ENCODE measurements at regions of chr17 and their contacts with region 1.

Region 1: DNA sequence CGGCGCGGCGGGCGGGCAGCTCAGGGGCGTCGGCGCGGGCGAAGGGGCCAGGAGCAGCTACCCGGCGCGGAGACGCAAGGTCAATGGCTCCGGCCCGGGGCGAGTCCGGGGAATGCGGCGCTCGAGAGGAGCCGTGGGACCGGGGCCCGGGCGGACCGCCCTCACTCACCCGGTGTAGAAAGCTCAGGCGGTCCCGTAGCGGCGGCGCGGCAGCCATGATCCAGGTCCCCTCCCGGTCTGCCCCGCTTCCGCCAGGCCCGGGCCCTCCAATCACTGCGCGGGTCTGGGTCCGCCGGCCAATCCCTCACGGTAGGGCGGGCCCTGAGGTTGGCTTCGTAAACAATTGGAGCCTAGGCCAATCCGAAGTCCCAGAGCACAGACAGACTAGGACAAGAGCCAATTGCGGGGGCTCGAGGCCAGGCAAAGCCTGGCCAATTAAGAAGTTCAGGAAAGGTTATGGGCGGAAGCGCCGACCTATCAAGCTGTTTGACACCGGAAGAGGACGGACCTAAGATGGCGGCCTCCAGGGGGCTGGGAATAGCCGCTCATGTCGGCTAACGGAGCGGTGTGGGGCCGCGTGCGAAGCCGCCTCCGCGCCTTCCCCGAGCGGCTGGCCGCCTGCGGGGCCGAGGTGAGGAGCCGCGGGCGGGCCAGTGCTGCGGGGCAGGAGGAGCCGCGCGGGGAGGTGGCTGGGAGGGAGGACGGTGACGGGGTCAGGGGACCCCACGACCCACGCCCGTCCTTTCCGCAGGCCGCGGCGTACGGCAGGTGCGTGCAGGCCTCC is at the starts of genes NDUFAF8 and TEPSIN:
- DNase-seq: peak; percentile 97
- ATAC-seq: peak; percentile 99
- H3K4me3 Mint-ChIP-seq: peak within 1 kb of the TSS; percentile 93
- H3K27ac Mint-ChIP-seq: peak within 1 kb of the TSS; percentile 96
- H3K4me1 Mint-ChIP-seq: peaks cover 25% of the 10 kb centered on the region
- H3K27me3 Mint-ChIP-seq: no peaks in the 10 kb centered on the region
- total RNA-seq, gene NDUFAF8: 31.0 to 57.9 TPM
- total RNA-seq, gene TEPSIN: 17.8 to 20.3 TPM

Region 2: GRCh38 chr17:80414803-80415625 is 824.0 kb before region 1 on chr17 and contains the start of gene ENDOV:
- CTCF ChIA-PET with region 1: no interaction called
- POLR2A ChIA-PET with region 1: no interaction called
- intact Hi-C with region 1: loop called in 1 of 2 experiments (anchors 1 kb)
- DNase-seq: peak; percentile 95
- ATAC-seq: peak; percentile 96
- H3K4me3 Mint-ChIP-seq: peak within 1 kb of the TSS; percentile 81
- H3K27ac Mint-ChIP-seq: peak within 1 kb of the TSS; percentile 8
- H3K4me1 Mint-ChIP-seq: peaks cover 23% of the 10 kb centered on the region
- H3K27me3 Mint-ChIP-seq: peaks cover 16% of the 10 kb centered on the region
- total RNA-seq, gene ENDOV: 12.3 to 13.0 TPM

Region 3: DNA sequence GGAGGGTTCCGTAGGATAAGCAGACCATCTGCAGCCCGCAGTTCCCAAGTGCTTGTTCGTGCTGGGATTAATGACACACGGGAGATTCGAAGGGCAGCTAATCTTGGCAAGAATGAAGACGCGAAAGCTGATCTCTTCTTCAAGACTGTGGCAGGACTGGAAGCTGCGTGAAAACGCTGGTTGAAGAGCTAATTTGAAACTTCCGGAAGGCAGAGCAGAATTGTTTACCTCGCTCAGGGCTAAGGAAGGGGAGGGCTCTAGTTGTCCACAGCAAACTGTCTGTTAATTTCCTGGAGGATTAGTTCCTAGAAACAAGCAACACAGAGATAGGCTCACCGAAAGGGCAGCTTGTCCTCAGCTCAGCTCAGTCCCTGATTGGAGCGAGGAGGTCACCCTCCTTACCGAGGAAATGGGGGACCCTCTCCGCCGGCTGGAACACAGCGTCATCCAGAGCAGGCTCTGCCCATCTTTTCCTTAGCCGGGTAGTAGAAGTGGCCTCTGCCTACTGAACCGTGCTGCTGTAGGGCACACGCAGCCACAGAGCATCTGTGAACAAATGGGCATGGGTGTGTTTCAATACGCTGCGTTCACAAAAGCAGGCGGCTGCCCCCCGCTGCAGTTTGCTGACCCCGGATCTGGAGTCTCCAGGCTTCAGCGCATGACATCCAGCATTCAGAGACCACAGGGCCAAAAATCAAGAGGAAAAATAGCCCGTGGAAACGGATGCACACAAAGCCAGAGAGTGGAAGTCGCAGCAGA is 220.8 kb before region 1 on chr17:
- CTCF ChIA-PET with region 1: no interaction called
- POLR2A ChIA-PET with region 1: no interaction called
- intact Hi-C with region 1: loop called in 1 of 2 experiments (anchors 10 kb)
- DNase-seq: peak; percentile 54
- ATAC-seq: peak; percentile 84
- H3K4me3 Mint-ChIP-seq: peak overlapping the region; percentile 64
- H3K27ac Mint-ChIP-seq: peak overlapping the region; percentile 87
- H3K4me1 Mint-ChIP-seq: peaks cover 17% of the 10 kb centered on the region
- H3K27me3 Mint-ChIP-seq: no peaks in the 10 kb centered on the region

Region 4: DNA sequence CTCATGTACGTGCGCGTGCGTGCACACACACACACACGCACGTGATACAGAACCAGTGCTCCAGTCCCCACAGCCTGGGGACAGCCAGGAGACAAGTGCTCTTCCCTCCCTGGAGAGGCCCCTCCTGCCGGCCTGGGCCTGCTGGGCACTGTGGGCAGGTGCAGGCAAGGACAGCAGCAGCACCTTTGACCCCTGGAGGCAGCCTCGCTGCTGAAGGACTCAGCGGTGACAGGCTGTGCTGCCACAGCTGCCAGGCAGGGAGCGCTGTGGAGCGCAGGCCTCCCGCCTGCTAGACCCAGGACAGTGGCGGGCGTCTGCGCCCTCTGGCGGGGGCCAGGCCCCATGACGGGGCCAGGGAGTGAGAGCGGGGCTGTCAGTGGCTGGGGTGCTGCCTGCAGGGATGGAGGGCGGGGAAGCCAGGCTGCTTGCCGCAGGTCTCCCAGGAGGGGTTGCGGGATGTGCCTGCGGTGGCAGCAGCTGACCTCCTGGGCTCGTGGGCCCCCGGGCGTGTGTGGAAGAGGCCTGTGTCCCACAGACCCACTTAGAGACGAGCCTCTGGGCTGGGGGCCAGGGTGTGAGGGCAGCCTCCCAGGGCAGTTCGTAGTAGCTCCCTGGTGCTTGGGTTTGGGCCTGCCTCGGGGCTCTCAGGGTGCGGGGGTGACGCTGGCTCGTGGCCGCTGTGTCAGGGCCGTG is 137.2 kb before region 1 on chr17:
- CTCF ChIA-PET with region 1: no interaction called
- POLR2A ChIA-PET with region 1: no interaction called
- intact Hi-C with region 1: loop called in 1 of 2 experiments (anchors 1 kb)
- DNase-seq: peak; percentile 94
- ATAC-seq: peak; percentile 97
- H3K4me3 Mint-ChIP-seq: no peak overlapping the region
- H3K27ac Mint-ChIP-seq: no peak overlapping the region
- H3K4me1 Mint-ChIP-seq: peaks cover 14% of the 10 kb centered on the region
- H3K27me3 Mint-ChIP-seq: no peaks in the 10 kb centered on the region

Region 5: DNA sequence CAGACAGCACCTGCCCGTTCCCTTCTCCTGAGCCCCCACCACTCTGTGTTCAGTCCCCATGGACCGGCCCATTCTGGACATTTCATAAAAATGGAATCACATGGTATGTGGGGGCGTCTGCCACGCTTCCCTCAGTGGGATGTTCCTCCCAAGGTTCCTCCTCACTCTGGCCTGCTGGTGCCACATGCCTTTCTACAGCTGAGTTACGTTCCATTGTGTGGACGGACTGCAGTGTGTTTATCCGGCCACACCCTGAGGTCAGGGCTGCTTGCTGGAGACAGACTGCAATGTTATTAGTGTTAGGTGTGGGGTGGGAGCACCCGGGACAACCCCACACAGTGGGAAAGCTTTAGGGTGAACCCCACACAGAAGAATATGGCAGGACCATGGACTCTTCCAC is 67.1 kb before region 1 on chr17:
- CTCF ChIA-PET with region 1: no interaction called
- POLR2A ChIA-PET with region 1: no interaction called
- intact Hi-C with region 1: no loop called
- DNase-seq: no peak
- ATAC-seq: no peak
- H3K4me3 Mint-ChIP-seq: no peak overlapping the region
- H3K27ac Mint-ChIP-seq: no peak overlapping the region
- H3K4me1 Mint-ChIP-seq: no peaks in the 10 kb centered on the region
- H3K27me3 Mint-ChIP-seq: peaks cover 3% of the 10 kb centered on the region

Region 6: GRCh38 chr17:81484195-81484979 is 245.4 kb after region 1 on chr17:
- CTCF ChIA-PET with region 1: no interaction called
- POLR2A ChIA-PET with region 1: interaction called, 4 read pairs
- intact Hi-C with region 1: loop called in 1 of 2 experiments (anchors 1 kb)
- DNase-seq: peak; percentile 94
- ATAC-seq: peak; percentile 68
- H3K4me3 Mint-ChIP-seq: peak overlapping the region; percentile 30
- H3K27ac Mint-ChIP-seq: no peak overlapping the region
- H3K4me1 Mint-ChIP-seq: peaks cover 16% of the 10 kb centered on the region
- H3K27me3 Mint-ChIP-seq: peaks cover 26% of the 10 kb centered on the region

Region 7: GRCh38 chr17:81636505-81637288 is 397.7 kb after region 1 on chr17 and contains the starts of genes NPLOC4 and TSPAN10:
- CTCF ChIA-PET with region 1: no interaction called
- POLR2A ChIA-PET with region 1: no interaction called
- intact Hi-C with region 1: loop called in 1 of 2 experiments (anchors 1 kb)
- DNase-seq: peak; percentile 91
- ATAC-seq: peak; percentile 89
- H3K4me3 Mint-ChIP-seq: peak within 1 kb of the TSS; percentile 96
- H3K27ac Mint-ChIP-seq: peak within 1 kb of the TSS; percentile 84
- H3K4me1 Mint-ChIP-seq: peaks cover 23% of the 10 kb centered on the region
- H3K27me3 Mint-ChIP-seq: no peaks in the 10 kb centered on the region
- total RNA-seq, gene NPLOC4: 71.8 to 93.1 TPM
- total RNA-seq, gene TSPAN10: 0.34 to 0.35 TPM

Measured in activated CD4-positive, alpha-beta T cell treated with anti-CD3 and anti-CD28 coated beads for 36 hours (primary cell).